ENCODE measurements at regions of chr4 and their contacts with region 1.

Region 1: DNA sequence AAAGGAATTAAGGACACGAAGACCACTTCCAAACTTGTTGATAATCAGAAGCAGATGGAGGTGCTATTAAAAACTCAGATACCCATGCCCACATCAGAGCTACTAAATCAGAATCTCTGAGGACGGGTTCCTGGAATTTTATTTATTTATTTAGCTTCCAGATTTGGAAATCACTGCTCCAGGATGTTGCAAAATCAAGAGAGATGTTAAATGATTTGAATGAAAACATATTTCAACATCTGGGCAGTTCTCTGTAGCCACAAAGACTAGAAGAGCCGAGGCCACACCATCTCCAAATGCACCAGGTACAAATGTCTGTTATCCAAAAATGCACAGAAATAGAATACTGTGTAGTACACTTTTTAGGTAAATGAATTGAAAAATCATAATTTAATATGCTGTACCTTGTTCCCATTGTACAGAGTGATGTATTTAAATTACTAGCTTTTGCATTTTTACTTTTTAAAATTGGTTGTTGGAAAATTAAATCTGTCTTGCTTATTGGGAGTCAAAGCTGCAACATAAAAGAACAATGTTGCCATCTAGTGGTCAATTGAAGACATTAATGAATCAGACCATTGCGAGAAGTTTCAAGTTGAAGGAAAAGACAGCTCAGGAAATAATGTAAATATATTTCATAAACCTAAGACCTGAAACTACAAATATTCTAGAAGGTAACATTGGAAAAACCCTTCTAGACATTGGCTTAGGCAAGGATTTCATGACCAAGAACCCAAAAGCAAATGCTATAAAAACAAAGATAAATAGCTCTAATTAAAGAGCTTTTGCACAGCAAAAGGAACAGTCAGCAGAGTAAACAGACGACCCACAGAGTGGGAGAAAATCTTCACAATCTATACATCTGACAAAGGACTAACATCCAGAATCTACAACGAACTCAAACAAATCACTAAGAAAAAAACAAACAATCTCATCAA is 151.3 kb upstream of the TTC29 start:
- DNase-seq: peak in 6 of 9 donors; percentile 12 to 57 (median 40)
- ATAC-seq: peak; percentile 41
- H3K4me3 ChIP-seq: no peak overlapping the region
- H3K4me3 Mint-ChIP-seq: no peak overlapping the region
- H3K27ac ChIP-seq: no peak overlapping the region
- H3K27ac Mint-ChIP-seq: no peak overlapping the region
- H3K4me1 ChIP-seq: no peaks in the 10 kb centered on the region
- H3K4me1 Mint-ChIP-seq: no peaks in the 10 kb centered on the region
- H3K27me3 ChIP-seq: no peaks in the 10 kb centered on the region
- H3K27me3 Mint-ChIP-seq: peaks cover 14 to 26% (median 17%) of the 10 kb centered on the region in 5 donors

Region 2: GRCh38 chr4:145840162-145840768 is 1256.7 kb before region 1 on chr4:
- CTCF ChIA-PET with region 1: no interaction called
- POLR2A ChIA-PET with region 1: no interaction called
- intact Hi-C with region 1: loop called in 1 of 2 experiments (anchors 2 kb)
- DNase-seq: peak in 6 of 9 donors; percentile 7 to 34 (median 24)
- ATAC-seq: peak; percentile 89
- H3K4me3 ChIP-seq: no peak overlapping the region
- H3K4me3 Mint-ChIP-seq: no peak overlapping the region
- H3K27ac ChIP-seq: no peak overlapping the region
- H3K27ac Mint-ChIP-seq: peak overlapping the region in 2 of 9 donors; percentile 31 to 42
- H3K4me1 ChIP-seq: peaks cover 3 to 10% of the 10 kb centered on the region in 2 donors
- H3K4me1 Mint-ChIP-seq: peaks cover 15 to 29% (median 27%) of the 10 kb centered on the region in 7 donors
- H3K27me3 ChIP-seq: no peaks in the 10 kb centered on the region
- H3K27me3 Mint-ChIP-seq: no peaks in the 10 kb centered on the region

Region 3: GRCh38 chr4:146095091-146095690 is 1001.7 kb before region 1 on chr4:
- CTCF ChIA-PET with region 1: no interaction called
- POLR2A ChIA-PET with region 1: no interaction called
- intact Hi-C with region 1: loop called in 1 of 2 experiments (anchors 2 kb)
- DNase-seq: peak in 2 of 9 donors; percentile 3 to 7
- ATAC-seq: no peak
- H3K4me3 ChIP-seq: no peak overlapping the region
- H3K4me3 Mint-ChIP-seq: no peak overlapping the region
- H3K27ac ChIP-seq: no peak overlapping the region
- H3K27ac Mint-ChIP-seq: no peak overlapping the region
- H3K4me1 ChIP-seq: no peaks in the 10 kb centered on the region
- H3K4me1 Mint-ChIP-seq: no peaks in the 10 kb centered on the region
- H3K27me3 ChIP-seq: no peaks in the 10 kb centered on the region
- H3K27me3 Mint-ChIP-seq: peaks cover 13 to 25% (median 16%) of the 10 kb centered on the region in 5 donors

Region 4: GRCh38 chr4:146342600-146343192 is 754.2 kb before region 1 on chr4:
- CTCF ChIA-PET with region 1: interaction called, 27 read pairs
- POLR2A ChIA-PET with region 1: no interaction called
- intact Hi-C with region 1: loop called (anchors 1 kb)
- DNase-seq: peak in 5 of 9 donors; percentile 27 to 43 (median 31)
- ATAC-seq: no peak
- H3K4me3 ChIP-seq: no peak overlapping the region
- H3K4me3 Mint-ChIP-seq: no peak overlapping the region
- H3K27ac ChIP-seq: no peak overlapping the region
- H3K27ac Mint-ChIP-seq: no peak overlapping the region
- H3K4me1 ChIP-seq: no peaks in the 10 kb centered on the region
- H3K4me1 Mint-ChIP-seq: peaks cover 0 to 12% (median 5%) of the 10 kb centered on the region in 7 donors
- H3K27me3 ChIP-seq: no peaks in the 10 kb centered on the region
- H3K27me3 Mint-ChIP-seq: no peaks in the 10 kb centered on the region

Region 5: DNA sequence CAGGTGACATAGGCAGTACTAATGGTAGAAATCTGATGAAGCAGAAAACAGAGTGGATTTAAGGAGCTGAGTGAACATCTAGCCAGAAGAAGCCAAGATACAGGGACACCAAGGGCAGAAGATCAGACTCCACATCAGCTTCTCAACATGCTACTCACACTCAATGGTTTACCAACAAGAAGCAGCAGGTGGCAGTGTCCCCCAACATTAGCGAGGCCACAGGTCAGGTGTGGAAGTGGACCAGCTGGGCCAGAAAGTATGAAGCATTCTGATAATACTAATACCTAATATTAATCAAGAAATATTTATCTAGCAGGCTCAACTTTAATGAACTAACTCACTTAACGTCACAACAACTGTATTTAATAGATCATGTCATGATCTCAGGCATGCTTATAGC is 77.9 kb before region 1 on chr4:
- CTCF ChIA-PET with region 1: interaction called, 22 read pairs
- POLR2A ChIA-PET with region 1: no interaction called
- intact Hi-C with region 1: loop called (anchors 1 kb)
- DNase-seq: peak in 8 of 9 donors; percentile 18 to 41 (median 40)
- ATAC-seq: peak; percentile 37
- H3K4me3 ChIP-seq: no peak overlapping the region
- H3K4me3 Mint-ChIP-seq: no peak overlapping the region
- H3K27ac ChIP-seq: no peak overlapping the region
- H3K27ac Mint-ChIP-seq: no peak overlapping the region
- H3K4me1 ChIP-seq: no peaks in the 10 kb centered on the region
- H3K4me1 Mint-ChIP-seq: no peaks in the 10 kb centered on the region
- H3K27me3 ChIP-seq: no peaks in the 10 kb centered on the region
- H3K27me3 Mint-ChIP-seq: peaks cover 0 to 5% (median 0%) of the 10 kb centered on the region in 5 donors

Region 6: DNA sequence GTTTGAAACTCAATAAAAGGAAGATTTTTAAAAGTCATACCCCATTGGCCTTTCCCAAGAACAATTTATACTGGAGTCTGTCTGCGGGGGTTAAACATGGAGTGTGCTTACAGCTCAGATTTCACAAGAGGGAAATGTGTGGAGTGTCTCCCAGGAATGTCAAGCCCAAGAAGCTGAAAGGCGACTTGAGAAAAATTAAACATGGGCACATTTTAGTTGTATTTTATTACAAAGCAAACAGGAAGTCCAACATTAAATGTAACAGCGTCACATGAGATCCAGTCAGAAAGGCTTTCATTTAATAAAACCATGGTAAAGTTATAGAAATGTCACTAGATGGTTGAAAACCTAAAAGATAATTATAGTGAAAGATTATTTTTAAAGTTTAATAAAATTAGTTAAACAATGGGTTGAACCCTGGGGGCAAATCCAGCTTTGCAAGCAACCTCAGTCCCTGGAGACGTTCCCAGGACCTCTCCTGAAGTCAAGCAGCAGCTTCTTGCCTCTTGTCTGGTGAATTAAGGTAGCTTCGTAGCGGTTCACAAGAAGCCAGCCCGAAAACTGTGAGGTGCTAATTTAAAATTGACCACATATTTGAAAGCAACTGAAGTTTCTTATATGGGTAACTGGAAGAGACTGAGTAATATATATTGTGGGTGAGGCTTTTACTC is 215.6 kb after region 1 on chr4:
- CTCF ChIA-PET with region 1: no interaction called
- POLR2A ChIA-PET with region 1: no interaction called
- intact Hi-C with region 1: no loop called
- DNase-seq: no peak
- ATAC-seq: no peak
- H3K4me3 ChIP-seq: no peak overlapping the region
- H3K4me3 Mint-ChIP-seq: no peak overlapping the region
- H3K27ac ChIP-seq: no peak overlapping the region
- H3K27ac Mint-ChIP-seq: no peak overlapping the region
- H3K4me1 ChIP-seq: no peaks in the 10 kb centered on the region
- H3K4me1 Mint-ChIP-seq: no peaks in the 10 kb centered on the region
- H3K27me3 ChIP-seq: no peaks in the 10 kb centered on the region
- H3K27me3 Mint-ChIP-seq: peaks cover 0 to 6% (median 0%) of the 10 kb centered on the region in 5 donors